ENCODE measurements at regions of chr9 and their contacts with region 1.

Region 1: GRCh38 chr9:21078717-21079116 is 975 bp upstream of the IFNB1 start:
- DNase-seq: no peak
- H3K4me3 Mint-ChIP-seq: no peak overlapping the region
- H3K27ac Mint-ChIP-seq: no peak overlapping the region
- H3K4me1 Mint-ChIP-seq: peaks cover 27% of the 10 kb centered on the region
- H3K27me3 Mint-ChIP-seq: peaks cover 15% of the 10 kb centered on the region

Region 2: DNA sequence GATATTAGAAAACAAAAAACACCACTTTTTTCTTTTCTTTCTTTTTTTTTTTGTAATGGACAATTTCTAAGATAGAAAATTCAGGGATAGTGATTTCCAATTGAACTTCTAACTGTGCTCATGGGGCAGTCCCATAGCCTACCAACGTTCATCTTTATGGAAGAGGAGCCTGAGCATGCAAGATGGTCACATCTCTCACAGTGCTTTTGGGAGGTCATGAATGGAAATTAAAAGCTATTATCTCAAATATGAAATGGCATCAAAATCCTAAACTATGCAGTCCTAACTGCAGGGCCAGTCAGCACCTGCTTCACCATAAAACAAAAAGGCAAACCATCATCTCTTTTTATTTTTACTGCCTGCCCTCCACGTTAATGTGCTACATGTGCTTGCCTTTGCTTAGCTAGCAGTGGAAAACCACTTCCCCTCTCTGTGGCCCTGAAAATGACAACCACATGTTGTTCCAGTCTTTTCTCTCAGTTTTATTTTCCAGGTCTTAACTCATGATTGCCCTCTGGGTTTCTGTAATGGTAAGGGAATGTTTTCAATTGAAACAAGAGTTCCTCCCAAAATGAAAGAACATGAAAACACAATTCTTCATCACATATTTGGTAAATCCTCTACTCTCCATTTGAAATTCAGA is 17.7 kb before region 1 on chr9:
- intact Hi-C with region 1: loop called (anchors 1 kb)
- DNase-seq: peak; percentile 78
- H3K4me3 Mint-ChIP-seq: peak overlapping the region; percentile 8
- H3K27ac Mint-ChIP-seq: peak overlapping the region; percentile 40
- H3K4me1 Mint-ChIP-seq: peaks cover 18% of the 10 kb centered on the region
- H3K27me3 Mint-ChIP-seq: peaks cover 3% of the 10 kb centered on the region

Region 3: GRCh38 chr9:21096172-21096900 is 17.6 kb after region 1 on chr9:
- intact Hi-C with region 1: loop called (anchors 2 kb)
- DNase-seq: peak; percentile 85
- H3K4me3 Mint-ChIP-seq: peak overlapping the region; percentile 68
- H3K27ac Mint-ChIP-seq: peak overlapping the region; percentile 76
- H3K4me1 Mint-ChIP-seq: peaks cover 32% of the 10 kb centered on the region
- H3K27me3 Mint-ChIP-seq: no peaks in the 10 kb centered on the region

Region 4: DNA sequence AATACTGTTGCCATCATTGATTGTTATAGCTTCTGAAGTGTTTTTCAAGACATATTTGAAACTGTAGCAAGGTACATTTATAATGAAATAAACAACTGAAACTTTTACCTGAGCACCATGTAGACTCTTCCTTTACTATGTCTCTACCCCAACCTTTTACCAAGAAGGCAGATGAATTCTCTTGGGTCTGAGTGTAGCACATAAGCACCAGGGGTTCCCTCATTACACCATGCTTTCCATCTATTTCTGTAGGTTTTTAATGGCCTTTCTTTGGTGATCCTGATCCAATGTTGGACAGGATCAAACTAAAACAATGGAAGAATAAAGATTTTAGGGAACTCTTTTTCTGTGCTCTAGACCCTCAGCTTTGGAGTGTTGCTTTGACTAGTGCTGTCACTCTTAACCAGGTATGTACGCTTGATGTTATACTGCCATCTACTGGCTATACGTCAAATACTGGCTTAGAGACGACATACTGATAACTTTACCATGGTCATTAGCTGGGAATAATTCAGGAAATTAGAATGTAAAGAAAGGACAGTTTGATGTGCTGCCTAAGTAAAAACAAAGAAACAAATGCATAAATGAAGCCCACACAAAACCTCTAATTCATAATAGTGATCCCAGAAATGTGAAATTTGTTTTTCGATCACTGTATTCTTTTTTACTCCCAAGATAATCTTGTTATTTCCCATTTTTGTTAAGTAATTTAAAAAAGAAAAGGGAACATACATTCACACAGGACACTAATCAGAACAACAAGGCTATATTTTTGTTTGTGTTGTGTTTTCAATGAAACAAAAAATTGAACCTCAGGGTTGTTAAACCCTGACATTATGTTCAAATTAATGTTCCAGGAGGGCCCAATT is 32.2 kb after region 1 on chr9:
- intact Hi-C with region 1: loop called (anchors 5 kb)
- DNase-seq: peak; percentile 81
- H3K4me3 Mint-ChIP-seq: no peak overlapping the region
- H3K27ac Mint-ChIP-seq: no peak overlapping the region
- H3K4me1 Mint-ChIP-seq: no peaks in the 10 kb centered on the region
- H3K27me3 Mint-ChIP-seq: peaks cover 24% of the 10 kb centered on the region